Mammary epithelial cell (primary cell): ENCODE measurements at regions of chr6 and their contacts with region 1.

Region 1: GRCh38 chr6:126170978-126171382 is 168.9 kb upstream of the CENPW start:
- DNase-seq: peak; percentile 14
- H3K4me3 ChIP-seq: no peak overlapping the region
- H3K27ac ChIP-seq: no peak overlapping the region
- H3K4me1 ChIP-seq: no peaks in the 10 kb centered on the region
- H3K27me3 ChIP-seq: no peaks in the 10 kb centered on the region
- CTCF ChIP-seq: peak; percentile 56 to 60

Region 2: GRCh38 chr6:125888989-125889656 is 281.9 kb before region 1 on chr6:
- CTCF ChIA-PET with region 1: no interaction called
- dilution Hi-C with region 1: no loop called
- in situ Hi-C with region 1: no loop called
- intact Hi-C with region 1: no loop called
- DNase-seq: peak; percentile 54
- H3K4me3 ChIP-seq: no peak overlapping the region
- H3K27ac ChIP-seq: no peak overlapping the region
- H3K4me1 ChIP-seq: no peaks in the 10 kb centered on the region
- H3K27me3 ChIP-seq: no peaks in the 10 kb centered on the region
- CTCF ChIP-seq: peak; percentile 46 to 60

Region 3: GRCh38 chr6:125995972-125996580 is 174.9 kb before region 1 on chr6:
- CTCF ChIA-PET with region 1: interaction called, 3 read pairs
- dilution Hi-C with region 1: no loop called
- in situ Hi-C with region 1: no loop called
- intact Hi-C with region 1: loop called (anchors 1 kb)
- DNase-seq: peak; percentile 64
- H3K4me3 ChIP-seq: peak overlapping the region; percentile 25 to 29 (median 26)
- H3K27ac ChIP-seq: no peak overlapping the region
- H3K4me1 ChIP-seq: no peaks in the 10 kb centered on the region
- H3K27me3 ChIP-seq: no peaks in the 10 kb centered on the region
- CTCF ChIP-seq: peak; percentile 96 to 98

Region 4: GRCh38 chr6:126033696-126034095 is 137.3 kb before region 1 on chr6:
- CTCF ChIA-PET with region 1: no interaction called
- dilution Hi-C with region 1: no loop called
- in situ Hi-C with region 1: no loop called
- intact Hi-C with region 1: loop called (anchors 1 kb)
- DNase-seq: peak; percentile 58
- H3K4me3 ChIP-seq: no peak overlapping the region
- H3K27ac ChIP-seq: no peak overlapping the region
- H3K4me1 ChIP-seq: peaks cover 3% of the 10 kb centered on the region
- H3K27me3 ChIP-seq: no peaks in the 10 kb centered on the region
- CTCF ChIP-seq: peak; percentile 57 to 66

Region 5: DNA sequence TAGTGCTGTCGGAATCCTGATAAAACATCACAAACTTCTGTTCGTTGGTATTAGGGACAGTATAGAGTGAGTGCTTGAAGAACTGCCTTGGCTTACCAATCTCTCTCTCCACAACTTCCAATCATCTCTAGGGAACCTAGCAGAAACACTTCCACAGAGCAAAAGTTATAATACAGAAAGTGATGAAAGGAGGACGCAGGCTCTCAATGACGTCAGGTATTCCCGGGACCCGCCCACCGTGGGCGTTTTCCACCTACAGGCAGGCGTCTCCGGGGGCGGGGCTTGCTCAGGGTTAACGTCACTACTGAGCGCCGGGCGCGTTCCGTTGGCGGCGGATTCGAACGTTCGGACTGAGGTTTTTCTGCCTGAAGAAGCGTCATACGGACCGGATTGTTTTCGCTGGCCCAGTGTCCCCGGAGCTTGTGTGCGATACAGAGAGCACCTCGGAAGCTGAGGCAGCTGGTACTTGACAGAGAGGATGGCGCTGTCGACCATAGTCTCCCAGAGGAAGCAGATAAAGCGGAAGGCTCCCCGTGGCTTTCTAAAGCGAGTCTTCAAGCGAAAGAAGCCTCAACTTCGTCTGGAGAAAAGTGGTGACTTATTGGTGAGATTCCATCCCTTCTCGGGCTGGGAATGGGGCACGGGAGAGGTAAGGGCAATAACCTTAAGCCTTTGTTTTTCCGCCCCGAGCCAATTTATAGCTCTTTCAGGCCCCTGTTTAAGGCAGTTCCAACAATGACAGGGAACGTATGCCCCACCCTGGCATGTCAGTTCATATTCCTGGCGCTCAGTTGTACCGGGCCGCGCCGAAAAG is 169.0 kb after region 1 on chr6 and contains the start of gene CENPW:
- CTCF ChIA-PET with region 1: no interaction called
- dilution Hi-C with region 1: no loop called
- in situ Hi-C with region 1: no loop called
- intact Hi-C with region 1: loop called (anchors 10 kb)
- DNase-seq: peak; percentile 90
- H3K4me3 ChIP-seq: peak within 1 kb of the TSS; percentile 72 to 89 (median 78)
- H3K27ac ChIP-seq: peak within 1 kb of the TSS; percentile 86
- H3K4me1 ChIP-seq: peaks cover 10% of the 10 kb centered on the region
- H3K27me3 ChIP-seq: no peaks in the 10 kb centered on the region
- CTCF ChIP-seq: no peak
- total RNA-seq, gene CENPW: 1.7 to 42.0 TPM

Region 6: DNA sequence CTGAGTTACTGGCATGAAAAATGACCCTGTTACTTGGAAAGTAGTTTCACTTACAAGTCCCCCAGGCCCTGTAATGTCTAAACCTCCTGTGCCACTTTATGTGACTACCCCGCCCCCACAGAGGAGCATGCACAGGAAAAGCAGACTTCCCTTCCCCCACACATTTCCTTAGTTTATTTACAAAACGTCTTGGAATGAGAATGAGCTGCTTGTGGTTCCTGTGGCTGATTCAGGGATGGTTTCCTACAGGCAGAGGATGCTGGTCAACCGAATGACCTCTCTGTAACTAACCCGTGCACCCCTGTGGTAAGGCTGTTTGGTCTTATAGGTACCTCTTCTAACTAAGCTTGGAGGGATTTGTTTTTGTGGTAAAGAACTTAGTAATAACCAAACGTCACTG is 976.0 kb after region 1 on chr6:
- CTCF ChIA-PET with region 1: no interaction called
- dilution Hi-C with region 1: no loop called
- in situ Hi-C with region 1: loop called in 1 of 2 experiments (anchors 25 kb)
- intact Hi-C with region 1: no loop called
- DNase-seq: peak; percentile 54
- H3K4me3 ChIP-seq: no peak overlapping the region
- H3K27ac ChIP-seq: no peak overlapping the region
- H3K4me1 ChIP-seq: no peaks in the 10 kb centered on the region
- H3K27me3 ChIP-seq: peaks cover 7% of the 10 kb centered on the region
- CTCF ChIP-seq: no peak